B cell (primary cell): ENCODE measurements at regions of chr1 and their contacts with region 1.

Region 1: GRCh38 chr1:183506561-183506960 is 34.3 kb downstream of the SMG7 start:
- DNase-seq: no peak
- ATAC-seq: no peak
- H3K4me3 ChIP-seq: no peak overlapping the region
- H3K4me3 Mint-ChIP-seq: no peak overlapping the region
- H3K27ac ChIP-seq: no peak overlapping the region
- H3K27ac Mint-ChIP-seq: no peak overlapping the region
- H3K4me1 ChIP-seq: no peaks in the 10 kb centered on the region
- H3K4me1 Mint-ChIP-seq: peaks cover 12% of the 10 kb centered on the region
- H3K27me3 ChIP-seq: no peaks in the 10 kb centered on the region
- H3K27me3 Mint-ChIP-seq: no peaks in the 10 kb centered on the region
- CTCF ChIP-seq: no peak

Region 2: GRCh38 chr1:183444243-183444642 is 62.3 kb before region 1 on chr1:
- CTCF ChIA-PET with region 1: no interaction called
- POLR2A ChIA-PET with region 1: no interaction called
- intact Hi-C with region 1: no loop called
- DNase-seq: no peak
- ATAC-seq: no peak
- H3K4me3 ChIP-seq: no peak overlapping the region
- H3K4me3 Mint-ChIP-seq: no peak overlapping the region
- H3K27ac ChIP-seq: no peak overlapping the region
- H3K27ac Mint-ChIP-seq: no peak overlapping the region
- H3K4me1 ChIP-seq: no peaks in the 10 kb centered on the region
- H3K4me1 Mint-ChIP-seq: no peaks in the 10 kb centered on the region
- H3K27me3 ChIP-seq: peaks cover 0 to 4% (median 0%) of the 10 kb centered on the region in 4 experiments
- H3K27me3 Mint-ChIP-seq: peaks cover 3% of the 10 kb centered on the region
- CTCF ChIP-seq: no peak

Region 3: GRCh38 chr1:183454390-183454789 is 52.2 kb before region 1 on chr1:
- CTCF ChIA-PET with region 1: no interaction called
- POLR2A ChIA-PET with region 1: no interaction called
- intact Hi-C with region 1: loop called (anchors 10 kb)
- DNase-seq: no peak
- ATAC-seq: no peak
- H3K4me3 ChIP-seq: no peak overlapping the region
- H3K4me3 Mint-ChIP-seq: no peak overlapping the region
- H3K27ac ChIP-seq: no peak overlapping the region
- H3K27ac Mint-ChIP-seq: no peak overlapping the region
- H3K4me1 ChIP-seq: no peaks in the 10 kb centered on the region
- H3K4me1 Mint-ChIP-seq: no peaks in the 10 kb centered on the region
- H3K27me3 ChIP-seq: peaks cover 0 to 11% (median 5%) of the 10 kb centered on the region in 4 experiments
- H3K27me3 Mint-ChIP-seq: peaks cover 26% of the 10 kb centered on the region
- CTCF ChIP-seq: no peak

Region 4: GRCh38 chr1:183554577-183554976 is 48.0 kb after region 1 on chr1:
- CTCF ChIA-PET with region 1: no interaction called
- POLR2A ChIA-PET with region 1: no interaction called
- intact Hi-C with region 1: no loop called
- DNase-seq: peak; percentile 44
- ATAC-seq: peak; percentile 86
- H3K4me3 ChIP-seq: no peak overlapping the region
- H3K4me3 Mint-ChIP-seq: no peak overlapping the region
- H3K27ac ChIP-seq: peak overlapping the region in 1 of 2 donors; percentile 44
- H3K27ac Mint-ChIP-seq: peak overlapping the region; percentile 42
- H3K4me1 ChIP-seq: peaks cover 9 to 12% of the 10 kb centered on the region in 2 donors
- H3K4me1 Mint-ChIP-seq: peaks cover 20% of the 10 kb centered on the region
- H3K27me3 ChIP-seq: no peaks in the 10 kb centered on the region
- H3K27me3 Mint-ChIP-seq: no peaks in the 10 kb centered on the region
- CTCF ChIP-seq: no peak

Region 5: GRCh38 chr1:183590244-183591191 is 84.0 kb after region 1 on chr1 and contains the start of gene NCF2:
- CTCF ChIA-PET with region 1: no interaction called
- POLR2A ChIA-PET with region 1: no interaction called
- intact Hi-C with region 1: no loop called
- DNase-seq: peak; percentile 91
- ATAC-seq: peak; percentile 84
- H3K4me3 ChIP-seq: peak within 1 kb of the TSS; percentile 20 to 81 (median 42)
- H3K4me3 Mint-ChIP-seq: peak within 1 kb of the TSS; percentile 37
- H3K27ac ChIP-seq: peak within 1 kb of the TSS; percentile 91 to 93
- H3K27ac Mint-ChIP-seq: peak within 1 kb of the TSS; percentile 95
- H3K4me1 ChIP-seq: peaks cover 61 to 64% of the 10 kb centered on the region in 2 donors
- H3K4me1 Mint-ChIP-seq: peaks cover 60% of the 10 kb centered on the region
- H3K27me3 ChIP-seq: no peaks in the 10 kb centered on the region
- H3K27me3 Mint-ChIP-seq: no peaks in the 10 kb centered on the region
- CTCF ChIP-seq: no peak
- total RNA-seq, gene NCF2: 10.5 and 10.7 TPM in 2 replicates